Adrenal gland (tissue), 19 donors: ENCODE measurements at regions of chr17 and their contacts with region 1.

Region 1: DNA sequence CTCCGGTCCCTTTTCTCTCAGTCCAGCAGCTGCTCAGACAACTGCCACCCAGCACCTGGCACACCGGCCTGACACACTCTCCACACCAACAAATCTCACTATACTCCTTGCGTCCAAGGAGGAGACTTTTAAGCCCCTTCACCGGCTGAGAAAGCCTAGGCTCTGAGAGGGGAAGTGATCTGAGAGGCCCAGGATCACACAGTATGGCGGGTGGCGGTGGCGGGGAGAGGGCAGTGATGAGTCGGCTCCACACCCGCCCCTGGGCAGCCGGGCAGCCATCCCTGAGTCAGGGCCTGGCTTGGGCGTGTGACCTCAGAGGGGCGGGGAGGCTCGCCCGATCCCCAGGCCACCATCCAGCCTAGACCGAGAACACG is 569 bp downstream of the FLII start:
- DNase-seq: peak; percentile 86 to 94 (median 91)
- H3K4me3 ChIP-seq: peak overlapping the region; percentile 30 to 97 (median 86)
- H3K27ac ChIP-seq: peak overlapping the region; percentile 92 to 100 (median 96)
- H3K4me1 ChIP-seq: peaks cover 39 to 49% of the 10 kb centered on the region in 2 donors
- H3K27me3 ChIP-seq: no peaks in the 10 kb centered on the region
- CTCF ChIP-seq: no peak
- POLR2A ChIP-seq: peak in 1 of 2 donors; percentile 81

Region 2: GRCh38 chr17:18183334-18184142 is 74.4 kb before region 1 on chr17 and contains the start of gene ALKBH5:
- intact Hi-C with region 1: loop called in 1 of 2 experiments (anchors 10 kb)
- DNase-seq: peak; percentile 97 to 100 (median 99)
- H3K4me3 ChIP-seq: peak within 1 kb of the TSS; percentile 39 to 85 (median 62)
- H3K27ac ChIP-seq: peak within 1 kb of the TSS; percentile 94 to 99 (median 98)
- H3K4me1 ChIP-seq: peaks cover 41 to 52% of the 10 kb centered on the region in 2 donors
- H3K27me3 ChIP-seq: no peaks in the 10 kb centered on the region
- CTCF ChIP-seq: peak in 4 of 6 experiments; percentile 12 to 40 (median 19)
- POLR2A ChIP-seq: peak; percentile 90 to 98
- total RNA-seq, gene ALKBH5: 52.2 to 154 (median 140) TPM

Region 3: GRCh38 chr17:18314731-18315561 is 57.0 kb after region 1 on chr17 and contains the starts of genes SMCR8 and TOP3A:
- intact Hi-C with region 1: no loop called
- DNase-seq: peak; percentile 97 to 99 (median 98)
- H3K4me3 ChIP-seq: peak within 1 kb of the TSS; percentile 52 to 84 (median 70)
- H3K27ac ChIP-seq: peak within 1 kb of the TSS; percentile 78 to 95 (median 94)
- H3K4me1 ChIP-seq: peaks cover 16 to 67% of the 10 kb centered on the region in 2 donors
- H3K27me3 ChIP-seq: no peaks in the 10 kb centered on the region
- CTCF ChIP-seq: peak in 2 of 6 experiments; percentile 32 to 41
- POLR2A ChIP-seq: peak; percentile 54 to 82
- total RNA-seq, gene SMCR8: 11.4 to 21.4 (median 17.8) TPM
- total RNA-seq, gene TOP3A: 20.4 to 59.6 (median 31.3) TPM